Activated CD4-positive, alpha-beta T cell treated with anti-CD3 and anti-CD28 coated beads for 36 hours (primary cell): ENCODE measurements at regions of chr6 and their contacts with region 1.

Region 1: DNA sequence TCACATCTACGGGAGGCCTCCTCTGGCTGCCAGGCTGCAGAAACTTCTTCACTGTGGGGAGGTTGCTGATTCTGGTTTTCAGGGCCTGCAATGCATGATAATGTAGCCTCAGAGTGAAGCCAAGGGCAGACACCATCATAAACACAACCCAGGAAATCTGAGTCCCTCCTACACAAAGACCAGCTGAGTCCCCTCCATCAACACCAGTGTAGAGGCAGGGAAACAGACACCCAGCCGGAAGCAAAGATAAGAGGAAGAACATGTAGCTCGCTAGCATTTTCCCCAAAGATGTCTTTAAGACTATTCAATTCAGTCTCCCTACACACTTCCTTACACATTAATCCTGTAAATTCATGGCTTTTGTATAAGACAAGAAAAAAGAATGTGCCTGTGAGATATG is 23.6 kb downstream of the GSTA2 start:
- DNase-seq: no peak
- ATAC-seq: no peak
- H3K4me3 Mint-ChIP-seq: no peak overlapping the region
- H3K27ac Mint-ChIP-seq: no peak overlapping the region
- H3K4me1 Mint-ChIP-seq: no peaks in the 10 kb centered on the region
- H3K27me3 Mint-ChIP-seq: peaks cover 10% of the 10 kb centered on the region

Region 2: GRCh38 chr6:52724406-52725121 is 15.1 kb before region 1 on chr6:
- CTCF ChIA-PET with region 1: interaction called, 15 read pairs
- POLR2A ChIA-PET with region 1: no interaction called
- intact Hi-C with region 1: no loop called
- DNase-seq: peak; percentile 82
- ATAC-seq: peak; percentile 95
- H3K4me3 Mint-ChIP-seq: no peak overlapping the region
- H3K27ac Mint-ChIP-seq: no peak overlapping the region
- H3K4me1 Mint-ChIP-seq: no peaks in the 10 kb centered on the region
- H3K27me3 Mint-ChIP-seq: peaks cover 2% of the 10 kb centered on the region